Left cardiac atrium (tissue), 4 donors: ENCODE measurements at regions of chr11 and their contacts with region 1.

Region 1: GRCh38 chr11:2137202-2138071 is 1.8 kb downstream of the IGF2 start:
- DNase-seq: peak; percentile 65
- ATAC-seq: peak; percentile 71 to 86

Region 2: DNA sequence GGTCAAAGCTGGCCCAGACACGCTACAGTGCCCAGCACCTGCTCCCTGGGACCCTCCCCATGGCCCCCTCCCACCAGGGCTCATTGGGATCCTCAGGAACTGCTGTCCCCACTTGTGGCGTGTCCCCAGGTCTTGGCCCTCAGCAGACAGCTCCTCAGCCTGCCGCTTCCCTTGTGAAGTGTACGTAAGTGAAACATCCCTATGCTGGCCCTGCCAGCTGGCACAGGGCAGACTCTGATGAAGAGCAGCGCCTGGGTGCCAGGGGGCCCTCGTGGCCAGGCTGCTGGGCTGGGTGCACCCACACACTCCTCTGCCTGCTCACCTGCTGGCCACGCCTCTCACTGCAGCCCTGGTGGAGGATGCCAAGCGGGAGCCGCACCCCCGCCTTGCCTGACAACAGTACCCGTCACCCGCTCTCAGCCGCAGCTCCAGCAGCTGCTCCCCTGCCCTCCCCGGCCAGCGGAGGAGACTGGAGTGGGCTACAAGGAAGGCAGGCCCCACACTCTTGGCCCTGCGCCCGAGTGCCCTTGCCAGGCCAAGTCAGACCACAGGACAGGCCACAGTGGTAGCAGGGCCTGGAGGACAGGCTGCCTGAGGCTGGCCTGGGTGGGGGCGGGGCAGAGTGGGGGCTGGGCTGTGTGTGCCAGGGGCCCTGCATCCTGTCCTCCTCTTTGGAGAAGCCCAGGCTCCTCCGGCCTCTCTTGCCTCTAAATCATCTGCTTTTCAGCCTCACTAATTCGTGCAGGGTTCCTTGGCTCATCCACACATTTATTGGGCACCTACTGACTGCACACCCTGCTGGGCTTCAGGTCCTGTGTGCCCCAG is 37.7 kb before region 1 on chr11:
- intact Hi-C with region 1: loop called in 1 of 2 experiments (anchors 5 kb)
- DNase-seq: no peak
- ATAC-seq: peak; percentile 16 to 70